CD8-positive, alpha-beta memory T cell (primary cell): ENCODE measurements at regions of chr6 and their contacts with region 1.

Region 1: DNA sequence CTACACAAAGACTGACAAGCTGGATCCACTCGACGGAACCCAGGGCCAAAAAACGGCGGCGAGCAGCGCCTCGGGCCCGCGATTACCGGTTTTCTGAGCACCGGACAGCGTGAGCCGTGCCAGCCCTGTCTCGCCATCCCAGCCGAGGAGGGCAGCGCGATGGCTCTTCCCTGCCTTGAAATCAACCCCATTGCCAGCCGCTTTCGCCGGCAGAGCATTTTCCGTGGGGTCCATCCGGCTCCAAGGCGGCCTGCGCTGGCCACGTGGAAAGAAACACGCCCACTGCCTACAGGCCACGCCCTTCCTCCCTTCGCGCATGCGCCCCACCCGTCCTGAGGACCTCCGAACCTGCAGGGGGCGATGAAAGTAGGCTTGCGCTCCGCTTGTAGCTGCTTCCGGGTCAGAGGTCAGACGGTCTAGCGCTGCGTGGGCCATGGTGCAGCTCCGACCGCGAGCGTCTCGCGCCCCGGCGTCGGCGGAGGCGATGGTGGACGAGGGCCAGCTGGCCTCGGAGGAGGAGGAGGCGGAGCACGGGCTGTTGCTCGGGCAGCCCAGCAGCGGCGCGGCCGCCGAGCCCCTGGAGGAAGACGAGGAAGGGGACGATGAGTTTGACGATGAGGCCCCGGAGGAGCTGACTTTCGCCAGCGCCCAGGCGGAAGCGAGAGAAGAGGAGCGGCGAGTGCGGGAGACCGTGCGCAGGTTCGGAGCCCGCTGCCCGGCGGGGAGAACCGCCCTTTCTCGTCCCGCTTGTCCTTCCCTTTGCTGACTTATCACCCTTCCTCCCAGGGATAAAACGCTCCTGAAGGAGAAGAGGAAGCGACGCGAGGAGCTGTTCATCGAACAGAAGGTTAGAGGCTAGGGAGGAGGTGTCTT is at the start of gene NOL7:
- DNase-seq: peak; percentile 98 to 99 (median 98)
- H3K4me3 ChIP-seq: peak within 1 kb of the TSS; percentile 92
- H3K4me3 Mint-ChIP-seq: peak within 1 kb of the TSS; percentile 89 to 99 (median 97)
- H3K27ac ChIP-seq: peak within 1 kb of the TSS; percentile 95
- H3K27ac Mint-ChIP-seq: peak within 1 kb of the TSS; percentile 87 to 99 (median 96)
- H3K4me1 ChIP-seq: peaks cover 24% of the 10 kb centered on the region
- H3K4me1 Mint-ChIP-seq: peaks cover 33 to 51% (median 43%) of the 10 kb centered on the region in 3 donors
- H3K27me3 ChIP-seq: no peaks in the 10 kb centered on the region
- H3K27me3 Mint-ChIP-seq: peaks cover 0 to 4% of the 10 kb centered on the region in 2 donors
- total RNA-seq, gene NOL7: 120 to 122 TPM

Region 2: GRCh38 chr6:13328076-13328874 is 286.9 kb before region 1 on chr6 and contains the start of gene TBC1D7:
- CTCF ChIA-PET with region 1: interaction called, 4 read pairs
- POLR2A ChIA-PET with region 1: interaction called, 23 read pairs
- DNase-seq: peak; percentile 92 to 96 (median 94)
- H3K4me3 ChIP-seq: peak within 1 kb of the TSS; percentile 89
- H3K4me3 Mint-ChIP-seq: peak within 1 kb of the TSS; percentile 91 to 98 (median 96)
- H3K27ac ChIP-seq: peak within 1 kb of the TSS; percentile 91
- H3K27ac Mint-ChIP-seq: peak within 1 kb of the TSS; percentile 87 to 99 (median 98)
- H3K4me1 ChIP-seq: peaks cover 17% of the 10 kb centered on the region
- H3K4me1 Mint-ChIP-seq: peaks cover 23 to 39% (median 28%) of the 10 kb centered on the region in 3 donors
- H3K27me3 ChIP-seq: no peaks in the 10 kb centered on the region
- H3K27me3 Mint-ChIP-seq: no peaks in the 10 kb centered on the region
- total RNA-seq, gene TBC1D7: 21.8 to 23.2 TPM

Region 3: GRCh38 chr6:13522656-13523055 is 92.5 kb before region 1 on chr6:
- CTCF ChIA-PET with region 1: no interaction called
- POLR2A ChIA-PET with region 1: no interaction called
- DNase-seq: no peak
- H3K4me3 ChIP-seq: no peak overlapping the region
- H3K4me3 Mint-ChIP-seq: no peak overlapping the region
- H3K27ac ChIP-seq: no peak overlapping the region
- H3K27ac Mint-ChIP-seq: no peak overlapping the region
- H3K4me1 ChIP-seq: peaks cover 14% of the 10 kb centered on the region
- H3K4me1 Mint-ChIP-seq: peaks cover 5 to 6% (median 6%) of the 10 kb centered on the region in 3 donors
- H3K27me3 ChIP-seq: no peaks in the 10 kb centered on the region
- H3K27me3 Mint-ChIP-seq: peaks cover 6% of the 10 kb centered on the region in 2 donors

Region 4: DNA sequence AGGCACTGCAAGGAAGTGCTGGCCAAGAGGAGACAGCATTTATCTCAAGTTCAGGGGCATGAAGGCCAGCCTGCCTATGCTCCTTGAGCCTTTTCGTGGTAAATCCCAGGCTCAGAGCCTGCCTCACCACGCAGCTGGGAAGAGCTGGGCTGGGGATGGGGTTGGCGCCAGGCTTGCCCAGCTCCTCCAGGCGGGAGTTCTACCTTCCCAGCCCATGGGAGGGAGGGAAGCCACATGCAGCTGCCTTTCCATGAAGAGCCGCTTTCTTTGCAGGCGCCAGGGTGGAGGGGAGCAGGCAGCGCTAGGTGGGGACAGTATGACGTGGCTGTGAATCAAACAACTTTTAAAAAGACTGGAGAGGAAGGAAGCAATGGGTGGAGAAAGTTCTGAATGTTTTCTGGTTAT is 60.2 kb before region 1 on chr6:
- CTCF ChIA-PET with region 1: no interaction called
- POLR2A ChIA-PET with region 1: no interaction called
- DNase-seq: no peak
- H3K4me3 ChIP-seq: no peak overlapping the region
- H3K4me3 Mint-ChIP-seq: no peak overlapping the region
- H3K27ac ChIP-seq: no peak overlapping the region
- H3K27ac Mint-ChIP-seq: no peak overlapping the region
- H3K4me1 ChIP-seq: no peaks in the 10 kb centered on the region
- H3K4me1 Mint-ChIP-seq: no peaks in the 10 kb centered on the region
- H3K27me3 ChIP-seq: no peaks in the 10 kb centered on the region
- H3K27me3 Mint-ChIP-seq: peaks cover 2 to 17% of the 10 kb centered on the region in 2 donors

Region 5: GRCh38 chr6:13687917-13688351 is 72.8 kb after region 1 on chr6:
- CTCF ChIA-PET with region 1: interaction called, 11 read pairs
- POLR2A ChIA-PET with region 1: interaction called, 10 read pairs
- DNase-seq: peak in 2 of 5 donors; percentile 52
- H3K4me3 ChIP-seq: no peak overlapping the region
- H3K4me3 Mint-ChIP-seq: peak overlapping the region; percentile 1 to 78 (median 69)
- H3K27ac ChIP-seq: no peak overlapping the region
- H3K27ac Mint-ChIP-seq: peak overlapping the region; percentile 80 to 97 (median 94)
- H3K4me1 ChIP-seq: peaks cover 62% of the 10 kb centered on the region
- H3K4me1 Mint-ChIP-seq: peaks cover 55 to 75% (median 65%) of the 10 kb centered on the region in 3 donors
- H3K27me3 ChIP-seq: no peaks in the 10 kb centered on the region
- H3K27me3 Mint-ChIP-seq: no peaks in the 10 kb centered on the region

Region 6: GRCh38 chr6:13711733-13712598 is 96.8 kb after region 1 on chr6 and contains the start of gene RANBP9:
- CTCF ChIA-PET with region 1: interaction called, 29 read pairs
- POLR2A ChIA-PET with region 1: interaction called, 46 read pairs
- DNase-seq: peak; percentile 82 to 95 (median 90)
- H3K4me3 ChIP-seq: peak within 1 kb of the TSS; percentile 57
- H3K4me3 Mint-ChIP-seq: peak within 1 kb of the TSS; percentile 96 to 99 (median 98)
- H3K27ac ChIP-seq: peak within 1 kb of the TSS; percentile 75
- H3K27ac Mint-ChIP-seq: peak within 1 kb of the TSS; percentile 96 to 99 (median 98)
- H3K4me1 ChIP-seq: peaks cover 31% of the 10 kb centered on the region
- H3K4me1 Mint-ChIP-seq: peaks cover 41 to 58% (median 53%) of the 10 kb centered on the region in 3 donors
- H3K27me3 ChIP-seq: no peaks in the 10 kb centered on the region
- H3K27me3 Mint-ChIP-seq: no peaks in the 10 kb centered on the region
- total RNA-seq, gene RANBP9: 45.4 to 47.0 TPM